SK-N-SH (cell line): ENCODE measurements at regions of chr2 and their contacts with region 1.

Region 1: DNA sequence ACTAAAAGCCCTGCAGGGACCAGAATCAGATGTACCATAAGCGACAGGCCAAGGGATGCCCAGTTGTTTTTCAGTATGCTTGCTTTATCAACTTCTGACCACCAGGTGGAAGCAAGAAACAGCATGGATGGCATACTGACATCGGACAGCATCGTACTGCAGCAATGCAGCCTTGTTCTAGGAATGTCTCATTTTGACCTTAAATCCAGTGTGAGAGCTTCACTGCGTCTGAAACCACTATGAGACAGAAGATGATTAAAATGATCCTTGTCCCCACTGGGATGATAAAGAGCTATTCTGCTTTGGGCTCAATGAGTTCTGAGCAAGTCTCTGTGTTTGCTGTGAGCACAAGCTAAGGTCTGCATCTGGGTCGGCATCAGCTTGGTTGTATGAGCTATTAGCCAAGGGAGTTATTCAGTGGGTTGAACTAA is 54.3 kb downstream of the CDK15 start:
- DNase-seq: peak; percentile 79
- H3K4me3 ChIP-seq: no peak overlapping the region; a peak in 1 of 4 replicates
- H3K27ac ChIP-seq: peak overlapping the region; percentile 41 to 53
- H3K4me1 ChIP-seq: peaks cover 3 to 20% of the 10 kb centered on the region in 2 experiments
- H3K27me3 ChIP-seq: no peaks in the 10 kb centered on the region
- CTCF ChIP-seq: peak; percentile 81
- EP300 ChIP-seq: no peak
- RAD21 ChIP-seq: peak; percentile 99

Region 2: DNA sequence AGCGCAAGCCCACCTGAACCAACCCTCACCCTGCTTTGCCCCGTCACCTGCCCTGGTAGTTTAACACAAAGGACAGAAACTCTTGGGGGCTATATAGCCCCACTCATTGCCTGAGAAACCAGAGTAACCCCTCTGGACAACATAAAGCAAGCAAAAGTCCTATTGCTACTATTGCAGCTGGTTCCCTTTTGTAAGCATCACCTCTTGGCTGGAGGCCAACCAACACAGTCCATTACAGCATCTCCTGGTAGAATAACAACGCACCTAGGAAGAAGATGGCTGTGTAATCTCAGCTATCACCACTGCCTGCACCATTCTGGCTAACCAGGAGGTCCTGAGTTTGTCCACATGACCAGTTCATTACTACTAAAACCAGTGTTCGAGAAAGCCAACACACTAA is 540.0 kb before region 1 on chr2:
- CTCF ChIA-PET with region 1: no interaction called
- POLR2A ChIA-PET with region 1: no interaction called
- DNase-seq: no peak
- H3K4me3 ChIP-seq: no peak overlapping the region
- H3K27ac ChIP-seq: no peak overlapping the region
- H3K4me1 ChIP-seq: no peaks in the 10 kb centered on the region; a peak in 1 of 4 replicates
- H3K27me3 ChIP-seq: no peaks in the 10 kb centered on the region
- CTCF ChIP-seq: no peak
- EP300 ChIP-seq: no peak
- RAD21 ChIP-seq: no peak

Region 3: GRCh38 chr2:201807452-201807999 is 53.1 kb before region 1 on chr2:
- CTCF ChIA-PET with region 1: interaction called, 12 read pairs
- POLR2A ChIA-PET with region 1: no interaction called
- DNase-seq: peak; percentile 36
- H3K4me3 ChIP-seq: no peak overlapping the region
- H3K27ac ChIP-seq: peak overlapping the region; percentile 58 to 76
- H3K4me1 ChIP-seq: peaks cover 17 to 18% of the 10 kb centered on the region in 2 experiments
- H3K27me3 ChIP-seq: no peaks in the 10 kb centered on the region
- CTCF ChIP-seq: no peak
- EP300 ChIP-seq: no peak
- RAD21 ChIP-seq: no peak

Region 4: GRCh38 chr2:201880993-201881611 is 20.5 kb after region 1 on chr2:
- CTCF ChIA-PET with region 1: interaction called, 23 read pairs
- POLR2A ChIA-PET with region 1: no interaction called
- DNase-seq: no peak
- H3K4me3 ChIP-seq: no peak overlapping the region
- H3K27ac ChIP-seq: peak overlapping the region; percentile 44 to 58
- H3K4me1 ChIP-seq: peaks cover 43 to 44% of the 10 kb centered on the region in 2 experiments
- H3K27me3 ChIP-seq: no peaks in the 10 kb centered on the region
- CTCF ChIP-seq: no peak
- EP300 ChIP-seq: peak in 1 of 2 experiments; percentile 19; a peak in 1 of 4 replicates
- RAD21 ChIP-seq: no peak

Region 5: GRCh38 chr2:201984800-201985525 is 124.3 kb after region 1 on chr2:
- CTCF ChIA-PET with region 1: interaction called, 13 read pairs
- POLR2A ChIA-PET with region 1: no interaction called
- DNase-seq: peak; percentile 51
- H3K4me3 ChIP-seq: no peak overlapping the region
- H3K27ac ChIP-seq: peak overlapping the region in 1 of 2 experiments; percentile 68; a peak in 2 of 4 replicates
- H3K4me1 ChIP-seq: peaks cover 0 to 36% of the 10 kb centered on the region in 2 experiments; a peak in 1 of 4 replicates
- H3K27me3 ChIP-seq: no peaks in the 10 kb centered on the region
- CTCF ChIP-seq: no peak
- EP300 ChIP-seq: no peak
- RAD21 ChIP-seq: peak; percentile 28

Region 6: GRCh38 chr2:202064171-202064880 is 203.7 kb after region 1 on chr2:
- CTCF ChIA-PET with region 1: interaction called, 21 read pairs
- POLR2A ChIA-PET with region 1: no interaction called
- DNase-seq: peak; percentile 27
- H3K4me3 ChIP-seq: peak overlapping the region in 1 of 2 experiments; percentile 27; a peak in 1 of 4 replicates
- H3K27ac ChIP-seq: peak overlapping the region; percentile 83 to 96
- H3K4me1 ChIP-seq: peaks cover 16 to 18% of the 10 kb centered on the region in 2 experiments; a peak in 2 of 4 replicates
- H3K27me3 ChIP-seq: no peaks in the 10 kb centered on the region
- CTCF ChIP-seq: no peak
- EP300 ChIP-seq: peak in 1 of 2 experiments; percentile 42; a peak in 1 of 4 replicates
- RAD21 ChIP-seq: no peak

Region 7: DNA sequence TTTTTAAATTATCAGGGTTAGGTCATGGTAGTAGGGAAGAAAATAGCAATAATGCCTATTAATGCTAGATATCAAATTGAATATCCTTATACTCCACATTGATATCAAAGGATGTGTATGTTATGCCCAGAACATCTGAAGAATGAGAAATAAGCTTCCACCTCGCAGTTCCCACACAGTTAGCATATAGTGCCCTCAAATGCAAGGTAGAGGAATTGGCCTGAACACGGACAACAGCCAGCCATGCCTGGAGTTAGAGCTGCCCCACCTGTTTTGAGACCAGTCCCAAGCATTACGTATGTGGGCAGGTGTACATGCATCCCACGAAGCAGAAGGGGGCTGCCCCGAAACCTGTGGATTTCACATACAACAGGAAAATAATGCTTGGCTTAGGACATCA is 298.1 kb after region 1 on chr2:
- CTCF ChIA-PET with region 1: interaction called, 49 read pairs
- POLR2A ChIA-PET with region 1: interaction called, 3 read pairs
- DNase-seq: no peak
- H3K4me3 ChIP-seq: no peak overlapping the region
- H3K27ac ChIP-seq: no peak overlapping the region
- H3K4me1 ChIP-seq: peaks cover 6 to 7% of the 10 kb centered on the region in 2 experiments; a peak in 2 of 4 replicates
- H3K27me3 ChIP-seq: no peaks in the 10 kb centered on the region
- CTCF ChIP-seq: peak; percentile 49
- EP300 ChIP-seq: no peak
- RAD21 ChIP-seq: peak; percentile 89

Region 8: DNA sequence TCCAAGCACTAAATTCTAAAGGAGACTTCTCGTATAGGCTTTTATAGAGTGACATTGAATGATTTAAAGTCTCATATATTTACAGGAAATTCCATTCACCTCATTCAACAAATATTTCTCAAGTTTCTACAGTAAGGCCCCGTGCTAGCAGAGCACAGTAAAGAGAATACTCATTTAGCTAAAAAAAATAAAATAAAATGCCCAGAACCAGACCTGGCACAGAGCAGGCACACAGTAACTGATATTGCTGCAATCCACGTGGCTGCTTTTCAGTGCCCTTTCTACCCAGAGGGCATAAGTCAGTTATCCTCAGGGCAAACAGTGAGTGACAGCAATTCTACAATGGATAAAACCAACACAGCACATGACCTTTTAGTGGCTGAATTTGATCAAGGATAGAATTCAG is 325.2 kb after region 1 on chr2:
- CTCF ChIA-PET with region 1: interaction called, 16 read pairs
- POLR2A ChIA-PET with region 1: no interaction called
- DNase-seq: no peak
- H3K4me3 ChIP-seq: no peak overlapping the region
- H3K27ac ChIP-seq: peak overlapping the region; percentile 54 to 58; a peak in 3 of 4 replicates
- H3K4me1 ChIP-seq: peaks cover 0 to 17% of the 10 kb centered on the region in 2 experiments; a peak in 3 of 4 replicates
- H3K27me3 ChIP-seq: no peaks in the 10 kb centered on the region
- CTCF ChIP-seq: no peak
- EP300 ChIP-seq: peak in 1 of 2 experiments; percentile 35; a peak in 1 of 4 replicates
- RAD21 ChIP-seq: no peak